Sciatic nerve (tissue), 2 donors: ENCODE measurements at regions of chr4 and their contacts with region 1.

Region 1: GRCh38 chr4:6873792-6874461 is 35.7 kb upstream of the TBC1D14 start:
- DNase-seq: peak; percentile 85
- ATAC-seq: peak; percentile 83

Region 2: GRCh38 chr4:6720202-6720699 is 153.7 kb before region 1 on chr4:
- intact Hi-C with region 1: loop called (anchors 5 kb)
- DNase-seq: peak; percentile 95
- ATAC-seq: peak; percentile 85

Region 3: DNA sequence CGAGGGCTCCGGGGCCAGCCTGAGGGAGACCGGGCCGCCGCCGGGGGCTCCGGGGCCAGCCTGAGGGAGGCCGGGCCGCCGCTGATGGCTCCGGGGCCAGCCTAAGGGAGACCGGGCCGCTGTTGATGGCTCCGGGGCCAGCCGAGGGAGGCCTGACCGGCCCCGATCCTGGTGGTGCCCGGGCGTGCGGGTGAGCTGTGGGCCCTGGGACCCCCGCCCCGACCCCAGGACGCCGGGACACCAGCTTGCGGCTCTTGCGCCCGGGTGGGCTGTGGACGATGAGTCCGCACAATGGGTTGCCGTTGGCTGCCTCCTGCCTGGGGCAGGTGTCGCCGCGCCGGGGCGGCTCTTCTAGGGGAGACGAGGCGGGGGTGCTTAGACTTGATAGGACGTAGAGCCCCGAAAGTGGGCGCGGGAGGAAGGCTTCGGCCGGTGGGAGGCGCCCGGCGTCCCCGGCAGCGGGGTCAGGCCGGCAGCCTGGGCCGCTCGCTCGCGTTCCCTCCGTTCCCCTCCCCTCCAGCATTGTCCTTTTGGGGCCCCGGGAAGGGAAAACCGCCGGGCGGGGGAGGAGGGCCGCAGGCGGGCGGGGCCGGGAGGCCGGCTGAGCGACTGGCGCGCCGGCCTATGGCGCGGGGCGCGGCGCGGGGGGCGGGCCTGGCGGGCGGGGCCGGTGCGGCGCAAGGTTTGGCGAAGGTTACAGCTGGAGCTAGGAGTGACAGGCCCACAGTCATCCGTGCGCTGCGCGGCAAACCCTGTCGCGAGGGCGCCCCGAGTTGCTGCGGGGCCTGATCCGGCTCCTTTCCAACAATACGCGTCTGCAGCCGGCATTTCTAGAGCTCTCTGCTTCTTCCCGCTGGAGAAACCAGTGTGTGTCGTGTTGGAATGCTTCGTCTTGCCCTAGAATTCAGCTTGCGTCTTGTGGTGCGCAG is 90.6 kb before region 1 on chr4:
- intact Hi-C with region 1: loop called (anchors 5 kb)
- DNase-seq: peak; percentile 94
- ATAC-seq: peak; percentile 93

Region 4: DNA sequence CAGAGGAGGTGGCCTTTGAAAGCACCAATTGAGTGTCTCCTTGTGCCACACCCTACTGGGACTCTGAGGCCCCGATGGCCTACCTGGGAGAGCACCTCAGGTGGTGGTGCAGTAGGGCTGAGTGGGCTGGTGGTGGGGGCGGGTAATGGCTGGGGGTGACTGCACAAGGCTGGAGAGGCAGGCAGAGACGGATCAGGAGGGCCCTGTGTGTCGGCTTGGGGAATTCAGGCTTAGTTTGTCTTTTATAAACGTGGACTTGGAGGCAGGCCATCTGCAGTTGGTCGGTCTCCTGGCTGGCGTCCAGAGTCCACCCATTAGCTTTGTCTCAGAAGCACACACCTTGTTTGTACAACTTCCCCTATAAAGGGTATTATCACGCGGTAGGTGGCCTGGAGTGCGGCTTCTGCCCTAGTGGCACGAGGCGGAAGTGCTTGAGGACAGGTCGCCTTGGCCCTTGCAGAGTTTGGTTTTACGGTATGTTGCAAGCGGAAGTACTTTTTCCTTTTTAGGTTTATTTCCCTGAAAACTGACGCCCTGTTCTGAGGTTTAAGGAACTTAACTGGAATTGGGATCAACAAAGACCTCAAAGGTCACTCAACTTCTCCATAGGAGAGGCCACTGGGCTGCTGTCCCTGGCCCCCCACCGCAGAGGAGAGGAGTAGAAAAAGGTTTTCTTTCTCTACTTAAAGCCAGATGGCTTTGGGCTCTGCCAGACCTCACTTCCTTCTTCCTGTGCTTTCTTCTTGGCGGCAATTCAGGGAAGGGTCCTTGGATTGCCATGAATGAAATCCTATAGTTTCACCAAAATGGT is 43.7 kb after region 1 on chr4:
- intact Hi-C with region 1: no loop called
- DNase-seq: peak; percentile 77
- ATAC-seq: peak; percentile 77